ENCODE measurements at regions of chr1 and their contacts with region 1.

Region 1: GRCh38 chr1:200669314-200670241 is at the start of gene DDX59:
- DNase-seq: peak; percentile 98
- H3K4me3 ChIP-seq: peak within 1 kb of the TSS; percentile 84 to 95
- H3K27ac ChIP-seq: peak within 1 kb of the TSS; percentile 99
- H3K4me1 ChIP-seq: peaks cover 7 to 18% of the 10 kb centered on the region in 2 experiments; a peak in 3 of 4 replicates
- H3K27me3 ChIP-seq: no peaks in the 10 kb centered on the region
- CTCF ChIP-seq: no peak
- EP300 ChIP-seq: peak; percentile 22 to 36; a peak in 2 of 4 replicates
- RAD21 ChIP-seq: no peak
- polyA plus RNA-seq, gene DDX59: 8.9 and 13.5 TPM in 2 replicates

Region 2: DNA sequence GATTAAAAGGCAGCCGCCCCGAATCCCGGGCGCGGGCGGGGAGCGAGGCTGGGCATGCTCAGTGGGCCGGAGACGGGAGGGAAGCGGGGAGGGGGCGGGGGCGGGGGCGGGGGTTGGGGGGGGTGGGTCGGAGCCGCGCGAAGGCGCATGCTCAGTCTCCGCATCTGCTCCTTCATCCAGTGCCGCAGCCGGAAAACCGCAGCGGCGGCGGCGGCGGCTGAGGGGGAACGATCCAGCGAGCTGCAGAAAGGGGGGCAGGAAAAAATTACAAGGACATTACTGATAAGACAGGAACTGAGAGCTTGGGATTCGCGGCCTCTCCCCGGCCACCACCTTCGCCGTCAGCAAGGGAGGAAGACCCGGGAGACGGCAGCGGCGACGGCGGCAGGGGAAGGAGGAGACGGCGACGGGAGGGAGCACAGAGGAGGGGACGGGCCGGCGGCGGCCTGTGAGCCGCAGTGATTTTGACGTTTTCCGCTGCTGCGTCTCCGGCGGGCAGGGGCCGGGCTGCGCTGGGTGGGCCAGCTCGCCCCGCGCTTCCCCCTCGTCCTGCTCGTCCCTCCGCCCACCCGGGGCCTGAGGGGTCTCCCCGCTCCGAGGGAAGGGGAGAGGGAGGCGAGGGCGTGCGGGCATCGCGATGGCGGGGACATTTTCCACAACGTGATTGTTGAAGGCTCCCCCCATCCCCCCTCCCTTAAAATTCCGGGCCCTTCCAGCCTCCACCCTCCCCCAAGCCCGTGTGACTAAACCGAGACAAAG is 69.3 kb after region 1 on chr1 and contains the start of gene CAMSAP2:
- CTCF ChIA-PET with region 1: interaction called, 5 read pairs
- POLR2A ChIA-PET with region 1: interaction called, 20 read pairs
- DNase-seq: peak; percentile 94
- H3K4me3 ChIP-seq: peak within 1 kb of the TSS; percentile 66 to 98
- H3K27ac ChIP-seq: peak within 1 kb of the TSS; percentile 99
- H3K4me1 ChIP-seq: peaks cover 6 to 18% of the 10 kb centered on the region in 2 experiments; a peak in 3 of 4 replicates
- H3K27me3 ChIP-seq: no peaks in the 10 kb centered on the region
- CTCF ChIP-seq: no peak
- EP300 ChIP-seq: no peak; a peak in 1 of 4 replicates
- RAD21 ChIP-seq: no peak
- polyA plus RNA-seq, gene CAMSAP2: 5.5 and 7.3 TPM in 2 replicates

Measured in SK-N-SH (cell line).